GM10248 (cell line): ENCODE measurements at regions of chr7 and their contacts with region 1.

Region 1: DNA sequence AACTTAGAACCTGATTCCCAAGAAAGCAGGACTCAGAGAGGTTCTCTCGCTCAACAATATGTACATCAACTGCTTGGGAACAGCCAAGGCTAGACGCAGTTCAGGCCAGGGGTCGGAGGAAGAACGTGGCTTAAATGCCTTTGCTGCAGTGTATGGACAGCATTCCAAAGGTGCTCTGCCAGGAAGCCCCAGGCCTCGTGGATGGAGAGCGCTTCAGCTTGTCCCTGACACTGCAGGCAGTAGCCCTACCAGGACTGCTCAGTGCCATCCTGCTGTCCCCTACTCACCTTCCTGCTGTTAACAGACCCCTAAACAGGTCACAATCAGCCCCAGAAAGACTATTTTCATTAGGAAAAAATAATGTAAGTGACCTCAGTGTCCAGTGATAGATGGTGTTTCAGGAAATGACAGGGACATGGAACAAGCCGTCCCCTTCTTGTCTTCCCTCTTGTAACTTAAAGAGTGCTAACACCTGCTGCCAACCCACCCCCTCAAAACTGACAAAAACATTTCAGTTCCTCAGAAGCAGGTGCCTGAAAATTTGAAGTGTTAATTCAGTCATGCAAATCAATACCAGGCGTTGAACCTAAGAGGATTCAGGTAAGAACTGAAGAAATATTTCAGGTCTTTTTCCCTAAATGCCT is 16.5 kb downstream of the CREB3L2 start:
- DNase-seq: peak; percentile 65
- CTCF ChIP-seq: no peak

Region 2: DNA sequence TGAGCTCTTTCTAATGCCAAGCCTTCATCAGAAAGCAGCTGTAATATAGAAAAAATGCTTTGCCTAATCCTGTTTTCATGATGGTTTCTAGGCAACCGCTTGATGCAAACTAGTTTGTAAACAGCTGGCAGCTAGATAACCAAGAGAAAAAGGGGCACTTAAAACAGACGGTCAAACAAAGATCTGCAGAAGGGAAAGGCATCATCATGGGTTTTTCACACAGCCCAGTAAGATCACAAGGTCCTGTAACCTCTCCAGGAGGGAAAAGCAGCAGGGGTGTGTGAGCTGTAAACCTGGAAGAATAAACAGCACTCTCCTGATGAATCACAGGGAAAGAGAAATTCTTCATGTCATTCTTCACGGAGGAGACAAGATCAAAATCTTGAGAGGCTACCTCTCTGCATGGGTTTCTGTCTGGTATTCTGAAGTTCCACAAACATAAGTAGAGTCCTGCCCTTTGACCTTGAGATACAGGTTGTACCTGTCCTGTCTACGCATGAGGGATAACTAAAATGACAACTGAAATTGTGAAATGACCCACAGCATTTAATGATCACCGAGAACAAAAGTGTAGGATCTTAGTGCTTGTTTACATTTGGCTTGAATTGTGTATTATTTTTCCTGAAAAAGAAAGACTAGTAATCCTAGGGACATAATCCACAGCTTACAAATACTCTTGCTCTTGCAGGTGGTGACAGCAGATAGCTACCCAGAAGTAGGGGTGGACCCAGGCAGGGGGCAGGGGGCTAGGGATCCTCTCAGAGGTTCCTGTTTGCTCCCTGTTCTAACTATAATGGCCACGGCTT is 31.5 kb before region 1 on chr7:
- CTCF ChIA-PET with region 1: interaction called, 10 read pairs
- POLR2A ChIA-PET with region 1: no interaction called
- DNase-seq: no peak
- CTCF ChIP-seq: no peak

Region 3: DNA sequence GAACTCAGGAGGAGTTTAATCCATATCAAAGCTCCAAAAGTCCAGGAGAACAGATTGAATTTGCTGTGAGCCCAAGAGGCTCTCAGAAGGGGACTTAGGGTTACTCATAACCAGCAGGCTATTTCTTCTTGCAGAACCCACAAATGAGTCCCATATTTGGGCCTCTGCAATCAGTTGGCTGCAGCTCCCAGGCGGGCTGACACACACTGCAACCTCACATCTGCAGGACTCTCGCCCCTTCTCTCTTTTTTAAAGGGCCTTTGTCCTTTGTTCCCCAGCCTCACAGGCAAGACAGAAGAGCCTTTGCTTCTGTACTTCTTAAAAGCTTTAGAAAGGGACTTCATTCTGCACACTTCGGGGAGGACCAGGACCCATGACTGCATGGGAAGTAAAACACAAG is 10.2 kb before region 1 on chr7:
- CTCF ChIA-PET with region 1: interaction called, 11 read pairs
- POLR2A ChIA-PET with region 1: no interaction called
- DNase-seq: peak; percentile 42
- CTCF ChIP-seq: no peak

Region 4: DNA sequence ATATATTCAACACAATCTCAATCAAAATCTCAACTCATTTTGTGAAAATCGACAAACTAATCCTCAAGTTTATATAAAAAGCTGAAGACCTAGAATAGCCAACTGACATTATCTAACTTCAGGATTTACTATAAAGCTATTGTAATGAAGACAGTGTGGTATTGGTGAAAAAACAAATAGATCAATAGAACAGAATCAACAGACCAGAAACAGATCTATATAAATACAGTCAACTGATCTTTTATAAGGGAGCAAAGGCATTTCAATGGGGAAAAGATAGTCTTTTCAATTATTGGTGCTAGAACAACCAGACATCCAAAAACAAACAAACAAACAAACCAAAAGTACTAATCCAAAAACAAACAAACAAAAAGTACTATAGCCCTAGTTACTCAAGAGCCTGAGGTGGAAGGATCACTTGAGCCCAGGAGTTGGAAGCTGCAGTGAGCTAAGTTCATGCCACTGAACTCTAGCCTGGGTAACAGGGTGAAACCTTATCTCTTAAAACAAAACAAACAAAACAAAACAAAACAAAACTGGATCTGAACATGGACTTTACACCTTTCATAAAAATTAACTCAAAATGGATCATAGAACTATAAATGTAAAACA is 64.2 kb after region 1 on chr7:
- CTCF ChIA-PET with region 1: no interaction called
- POLR2A ChIA-PET with region 1: no interaction called
- DNase-seq: no peak
- CTCF ChIP-seq: no peak